ENCODE measurements at regions of chr19 and their contacts with region 1.

Region 1: GRCh38 chr19:1402411-1403070 is 1.2 kb upstream of the GAMT start:
- DNase-seq: no peak
- ATAC-seq: no peak
- H3K4me3 ChIP-seq: no peak overlapping the region
- H3K27ac ChIP-seq: no peak overlapping the region
- H3K4me1 ChIP-seq: peaks cover 9% of the 10 kb centered on the region; the same call in 1 of the 2 replicates
- H3K27me3 ChIP-seq: no peaks in the 10 kb centered on the region
- CTCF ChIP-seq: no peak

Region 2: GRCh38 chr19:413756-414420 is 988.7 kb before region 1 on chr19:
- CTCF ChIA-PET with region 1: no interaction called
- POLR2A ChIA-PET with region 1: interaction called, 10 read pairs
- in situ Hi-C with region 1: no loop called
- intact Hi-C with region 1: no loop called
- DNase-seq: no peak
- ATAC-seq: no peak
- H3K4me3 ChIP-seq: no peak overlapping the region
- H3K27ac ChIP-seq: no peak overlapping the region
- H3K4me1 ChIP-seq: peaks cover 10% of the 10 kb centered on the region
- H3K27me3 ChIP-seq: no peaks in the 10 kb centered on the region
- CTCF ChIP-seq: no peak

Region 3: GRCh38 chr19:1429750-1430149 is 27.2 kb after region 1 on chr19:
- CTCF ChIA-PET with region 1: no interaction called
- POLR2A ChIA-PET with region 1: no interaction called
- in situ Hi-C with region 1: no loop called
- intact Hi-C with region 1: no loop called
- DNase-seq: no peak
- ATAC-seq: peak; percentile 42; the same call in 1 of the 2 replicates
- H3K4me3 ChIP-seq: no peak overlapping the region
- H3K27ac ChIP-seq: no peak overlapping the region
- H3K4me1 ChIP-seq: no peaks in the 10 kb centered on the region
- H3K27me3 ChIP-seq: no peaks in the 10 kb centered on the region
- CTCF ChIP-seq: no peak

Region 4: DNA sequence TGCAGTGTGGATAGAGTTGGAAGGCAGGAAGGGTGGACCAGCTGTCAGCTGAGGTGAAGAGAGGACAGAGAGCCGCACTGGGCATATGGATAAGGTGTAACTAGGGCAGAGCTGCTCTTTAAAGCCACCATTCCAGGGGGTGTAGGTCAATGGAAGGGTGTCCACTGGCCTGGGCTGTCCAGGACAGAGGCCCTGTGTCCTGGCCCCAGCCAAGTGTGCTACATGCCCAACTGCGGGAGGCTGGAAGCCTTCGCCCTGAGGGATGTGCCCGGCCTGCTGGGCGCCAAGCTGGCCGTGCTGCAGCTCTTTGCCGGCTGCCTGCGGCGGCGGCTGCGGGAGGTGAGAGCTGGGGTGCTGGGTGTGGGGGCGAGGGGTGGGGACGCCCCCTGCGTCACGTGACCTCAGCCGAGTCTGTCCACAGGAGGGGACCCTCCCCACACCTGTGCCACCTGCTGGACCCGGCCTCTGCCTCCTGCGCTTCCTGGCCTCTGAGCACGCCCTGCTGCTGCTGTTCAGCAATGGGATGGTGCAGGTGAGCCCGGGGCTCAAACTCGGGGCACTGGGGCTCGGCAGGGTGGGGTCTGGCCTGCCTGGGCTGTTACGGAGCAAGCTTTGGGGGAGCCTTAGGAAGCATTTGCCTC is 131.1 kb after region 1 on chr19:
- CTCF ChIA-PET with region 1: no interaction called
- POLR2A ChIA-PET with region 1: no interaction called
- in situ Hi-C with region 1: no loop called
- intact Hi-C with region 1: no loop called
- DNase-seq: no peak
- ATAC-seq: peak; percentile 68
- H3K4me3 ChIP-seq: no peak overlapping the region
- H3K27ac ChIP-seq: no peak overlapping the region
- H3K4me1 ChIP-seq: no peaks in the 10 kb centered on the region
- H3K27me3 ChIP-seq: no peaks in the 10 kb centered on the region
- CTCF ChIP-seq: no peak

Measured in Panc1 (cell line).